Transverse colon (tissue), 4 donors: ENCODE measurements at regions of chr22 and their contacts with region 1.

Region 1: DNA sequence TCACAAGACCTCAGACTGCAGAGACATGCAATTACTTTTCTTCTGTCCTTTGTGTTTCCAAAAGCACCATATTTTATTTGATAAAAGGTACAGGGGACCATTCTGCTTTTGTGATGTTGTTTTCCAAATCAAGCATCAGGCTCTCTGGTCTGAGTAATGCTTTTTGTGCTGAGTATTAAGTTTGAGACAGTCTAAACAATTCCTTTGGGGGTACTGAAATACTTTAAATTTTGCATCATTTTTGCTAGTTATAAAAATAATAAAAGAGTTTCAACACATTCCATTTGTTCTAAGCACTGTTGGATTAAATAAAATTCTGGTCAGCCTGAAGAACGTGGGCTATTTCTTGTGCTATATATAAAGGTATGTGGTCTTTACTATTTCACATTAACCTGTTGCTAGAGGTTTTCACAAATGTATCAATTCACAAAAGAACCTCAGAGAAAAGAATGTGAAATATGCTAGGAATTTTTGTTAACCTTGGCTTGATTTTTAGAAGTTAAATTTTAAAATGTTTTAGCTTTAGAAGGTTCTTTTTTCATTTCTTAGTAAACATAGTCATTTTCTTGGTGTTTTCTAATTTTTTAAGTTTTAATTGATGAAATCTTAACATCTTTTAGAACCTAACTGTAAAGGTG is 61.6 kb downstream of the C22orf31 start:
- DNase-seq: no peak
- H3K4me3 ChIP-seq: no peak overlapping the region
- H3K27ac ChIP-seq: no peak overlapping the region
- H3K4me1 ChIP-seq: peaks cover 3 to 21% (median 11%) of the 10 kb centered on the region in 4 donors
- H3K27me3 ChIP-seq: no peaks in the 10 kb centered on the region
- CTCF ChIP-seq: no peak
- EP300 ChIP-seq: no peak
- POLR2A ChIP-seq: no peak

Region 2: DNA sequence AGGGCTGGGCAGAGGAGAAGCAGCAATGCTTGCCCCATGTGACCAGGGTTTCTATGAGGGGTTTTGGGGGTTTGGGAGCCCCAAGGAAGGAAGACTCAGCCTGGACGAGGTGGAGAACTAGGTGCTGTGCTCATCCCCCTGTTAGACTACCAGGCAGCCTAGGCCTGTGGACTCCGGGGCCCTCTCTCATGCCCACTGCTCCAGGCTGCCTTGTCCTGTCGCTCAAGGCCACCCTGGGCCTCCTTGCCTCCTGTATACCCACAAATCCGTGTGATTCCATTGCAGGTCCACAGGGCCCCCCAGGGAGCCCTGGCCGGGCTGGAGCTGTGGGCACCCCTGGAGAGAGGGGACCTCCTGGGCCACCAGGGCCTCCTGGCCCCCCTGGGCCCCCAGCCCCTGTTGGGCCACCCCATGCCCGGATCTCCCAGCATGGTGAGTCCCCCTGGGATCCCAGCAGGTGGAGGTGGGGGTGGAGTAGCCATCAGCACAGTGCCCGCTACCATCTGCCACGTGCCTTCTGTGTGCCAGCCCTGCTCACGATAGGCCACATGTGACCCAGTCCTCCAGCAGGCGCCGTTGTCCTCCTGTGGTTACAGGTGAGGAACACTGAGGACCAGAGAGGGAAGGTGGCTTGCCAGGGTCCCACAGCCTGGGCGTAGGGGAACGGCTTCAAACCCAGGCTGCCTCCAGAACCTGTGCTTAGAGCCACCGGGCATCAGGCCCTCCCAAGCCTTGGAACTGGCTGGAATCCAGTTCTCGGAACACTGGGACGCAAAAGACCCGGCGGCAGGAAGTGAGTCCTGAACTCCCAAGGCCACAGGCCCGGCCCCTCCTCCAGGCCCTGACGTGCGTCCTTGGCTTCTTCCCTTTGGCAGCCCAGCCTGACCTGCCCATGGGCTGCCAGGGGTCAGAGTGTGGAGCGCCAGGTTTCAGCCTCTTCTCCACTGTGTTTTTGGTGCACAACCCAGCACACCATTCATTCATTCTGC is 232.2 kb after region 1 on chr22:
- in situ Hi-C with region 1: no loop called
- intact Hi-C with region 1: no loop called
- DNase-seq: no peak
- H3K4me3 ChIP-seq: no peak overlapping the region
- H3K27ac ChIP-seq: no peak overlapping the region
- H3K4me1 ChIP-seq: no peaks in the 10 kb centered on the region
- H3K27me3 ChIP-seq: no peaks in the 10 kb centered on the region
- CTCF ChIP-seq: no peak
- EP300 ChIP-seq: no peak
- POLR2A ChIP-seq: no peak

Region 3: GRCh38 chr22:29563652-29564460 is 563.8 kb after region 1 on chr22:
- in situ Hi-C with region 1: no loop called
- intact Hi-C with region 1: loop called (anchors 5 kb)
- DNase-seq: no peak
- H3K4me3 ChIP-seq: no peak overlapping the region
- H3K27ac ChIP-seq: no peak overlapping the region
- H3K4me1 ChIP-seq: no peaks in the 10 kb centered on the region
- H3K27me3 ChIP-seq: no peaks in the 10 kb centered on the region
- CTCF ChIP-seq: no peak
- EP300 ChIP-seq: no peak
- POLR2A ChIP-seq: no peak